ENCODE measurements at regions of chr6 and their contacts with region 1.

Region 1: GRCh38 chr6:87182321-87182720 is 27.0 kb downstream of the ZNF292 start:
- DNase-seq: no peak
- H3K4me3 Mint-ChIP-seq: peak overlapping the region; percentile 52
- H3K27ac Mint-ChIP-seq: peak overlapping the region; percentile 81
- H3K4me1 Mint-ChIP-seq: peaks cover 71% of the 10 kb centered on the region
- H3K27me3 Mint-ChIP-seq: no peaks in the 10 kb centered on the region

Region 2: DNA sequence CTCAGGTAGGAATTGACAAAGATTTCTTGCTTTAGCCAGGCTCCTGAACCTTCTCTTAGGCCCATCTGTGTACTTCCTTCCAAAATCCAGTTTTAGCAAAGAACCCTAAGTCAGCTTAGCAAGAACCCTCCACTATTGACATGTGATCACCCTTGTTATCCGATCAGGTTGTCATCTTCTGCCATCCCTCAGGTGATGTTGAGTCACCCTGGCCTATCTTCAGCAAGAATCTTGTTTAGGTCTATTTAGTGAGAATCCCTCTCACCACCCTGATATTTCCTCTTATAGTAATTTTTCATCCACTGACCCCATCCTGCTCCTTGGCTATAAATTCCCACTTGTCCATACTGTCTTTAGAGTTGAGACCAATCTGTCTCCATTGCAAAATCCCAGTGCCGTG is 49.1 kb before region 1 on chr6:
- intact Hi-C with region 1: no loop called
- DNase-seq: no peak
- H3K4me3 Mint-ChIP-seq: no peak overlapping the region
- H3K27ac Mint-ChIP-seq: no peak overlapping the region
- H3K4me1 Mint-ChIP-seq: no peaks in the 10 kb centered on the region
- H3K27me3 Mint-ChIP-seq: peaks cover 14% of the 10 kb centered on the region

Region 3: DNA sequence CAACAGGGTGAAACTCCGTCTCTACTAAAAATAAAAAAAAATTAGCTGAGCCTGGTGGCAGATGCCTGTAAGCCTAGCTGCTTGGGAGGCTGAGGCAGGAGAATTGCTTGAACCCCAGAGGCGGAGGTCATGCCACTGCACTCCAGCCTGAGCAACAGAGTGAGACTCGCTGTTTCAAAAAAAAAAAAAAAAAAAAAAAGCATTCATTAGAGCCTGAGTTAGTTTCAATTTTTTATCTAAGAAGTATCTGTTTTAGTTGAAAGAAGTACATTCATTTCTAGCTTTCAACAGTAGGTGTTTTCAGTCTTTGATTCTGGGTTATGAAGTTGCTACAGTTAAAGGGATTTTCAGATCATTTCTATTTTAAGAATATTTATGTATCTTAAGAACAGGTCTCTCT is 15.2 kb after region 1 on chr6:
- intact Hi-C with region 1: loop called (anchors 1 kb)
- DNase-seq: no peak
- H3K4me3 Mint-ChIP-seq: no peak overlapping the region
- H3K27ac Mint-ChIP-seq: no peak overlapping the region
- H3K4me1 Mint-ChIP-seq: peaks cover 53% of the 10 kb centered on the region
- H3K27me3 Mint-ChIP-seq: no peaks in the 10 kb centered on the region

Region 4: GRCh38 chr6:87210979-87211378 is 28.7 kb after region 1 on chr6:
- intact Hi-C with region 1: loop called (anchors 1 kb)
- DNase-seq: no peak
- H3K4me3 Mint-ChIP-seq: no peak overlapping the region
- H3K27ac Mint-ChIP-seq: no peak overlapping the region
- H3K4me1 Mint-ChIP-seq: peaks cover 59% of the 10 kb centered on the region
- H3K27me3 Mint-ChIP-seq: no peaks in the 10 kb centered on the region

Region 5: DNA sequence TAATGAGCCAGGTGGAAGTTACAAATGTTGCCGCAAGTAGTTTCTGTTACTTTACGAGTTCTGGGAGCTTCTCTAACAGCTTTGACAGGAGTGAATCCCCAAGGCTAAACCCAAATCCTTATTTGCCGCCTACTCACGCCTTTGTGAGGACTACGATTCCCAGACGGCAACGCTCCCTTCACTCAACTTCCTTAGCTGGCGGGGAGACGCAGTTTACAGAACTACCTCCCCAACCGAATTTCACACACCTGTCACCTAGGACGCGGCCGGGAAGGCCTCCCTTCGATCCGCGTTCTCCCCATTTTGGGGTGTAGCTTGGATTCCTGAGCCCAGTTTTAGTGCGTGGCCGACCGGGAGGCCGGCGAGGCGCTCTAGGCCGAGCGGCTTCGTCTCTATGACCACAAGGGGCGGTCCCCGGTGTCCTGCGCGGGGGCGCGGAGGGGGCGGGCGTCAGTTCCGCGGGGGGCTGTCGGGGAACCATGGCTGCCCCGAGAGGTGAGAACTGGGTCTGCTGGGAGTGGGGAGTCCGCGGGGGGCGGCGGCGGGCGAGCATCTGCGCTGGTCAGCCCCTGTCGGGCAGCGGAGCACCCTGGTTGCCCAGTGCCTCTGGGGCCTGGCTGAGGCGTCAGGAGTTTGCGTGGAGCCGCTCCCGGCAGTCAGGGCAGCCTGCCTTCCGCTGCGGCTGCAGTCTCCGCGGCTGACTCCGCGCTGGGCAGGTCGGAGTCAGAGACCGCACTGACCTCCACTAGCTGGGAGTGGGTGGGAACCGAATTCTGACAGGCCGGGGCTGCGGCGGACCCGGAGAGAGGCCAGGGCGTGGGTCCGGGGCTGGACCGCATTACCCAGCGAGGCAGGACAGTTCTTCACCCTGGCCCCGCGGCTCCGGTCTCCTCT is 290.5 kb after region 1 on chr6 and contains the start of gene SLC35A1:
- intact Hi-C with region 1: loop called (anchors 1 kb)
- DNase-seq: peak; percentile 77
- H3K4me3 Mint-ChIP-seq: peak within 1 kb of the TSS; percentile 98
- H3K27ac Mint-ChIP-seq: peak within 1 kb of the TSS; percentile 97
- H3K4me1 Mint-ChIP-seq: peaks cover 14% of the 10 kb centered on the region
- H3K27me3 Mint-ChIP-seq: peaks cover 7% of the 10 kb centered on the region
- total RNA-seq, gene SLC35A1: 9.7 and 10.2 TPM in 2 replicates

Region 6: GRCh38 chr6:87742106-87742505 is 559.8 kb after region 1 on chr6:
- intact Hi-C with region 1: loop called (anchors 1 kb)
- DNase-seq: peak; percentile 43
- H3K4me3 Mint-ChIP-seq: no peak overlapping the region
- H3K27ac Mint-ChIP-seq: peak overlapping the region; percentile 27
- H3K4me1 Mint-ChIP-seq: peaks cover 43% of the 10 kb centered on the region
- H3K27me3 Mint-ChIP-seq: peaks cover 2% of the 10 kb centered on the region

Measured in activated T-helper 1 cell treated with anti-CD3 and anti-CD28 coated beads, Interleukin-12 subunit alpha, Interleukin-12 subunit beta, Interleukin-2, Interleukin-4 antibody, amounts not matched to agents 30 ng/mL and 10 ng/mL and 1 ng/mL, durations not matched to agents 14 hours and 24 hours and 36 hours (primary cell).